HEK293T (cell line): ENCODE measurements at regions of chr9 and their contacts with region 1.

Region 1: GRCh38 chr9:94065535-94065961 is 18.7 kb upstream of the PTPDC1 start:
- DNase-seq: peak; percentile 56

Region 2: DNA sequence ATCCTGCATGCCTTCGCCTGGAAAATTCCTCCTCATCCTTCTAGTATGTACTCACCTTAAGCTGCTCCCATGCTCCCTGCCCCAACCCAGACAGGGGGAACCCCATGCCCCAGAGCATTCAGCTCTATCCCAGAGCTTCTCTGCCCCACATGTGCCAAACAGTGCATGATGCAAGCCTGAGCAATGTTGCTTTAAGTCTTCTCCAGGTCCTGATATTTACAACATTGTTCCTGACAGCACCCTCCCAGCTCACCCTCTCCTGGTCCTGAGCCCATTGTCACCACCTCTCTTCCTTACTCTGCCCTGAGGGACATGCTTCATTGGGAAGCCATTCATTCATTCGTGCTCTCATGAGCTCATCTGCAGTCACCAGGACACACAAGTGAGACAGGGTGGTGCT is 87.0 kb before region 1 on chr9:
- CTCF ChIA-PET with region 1: no interaction called
- POLR2A ChIA-PET with region 1: no interaction called
- DNase-seq: no peak

Region 3: DNA sequence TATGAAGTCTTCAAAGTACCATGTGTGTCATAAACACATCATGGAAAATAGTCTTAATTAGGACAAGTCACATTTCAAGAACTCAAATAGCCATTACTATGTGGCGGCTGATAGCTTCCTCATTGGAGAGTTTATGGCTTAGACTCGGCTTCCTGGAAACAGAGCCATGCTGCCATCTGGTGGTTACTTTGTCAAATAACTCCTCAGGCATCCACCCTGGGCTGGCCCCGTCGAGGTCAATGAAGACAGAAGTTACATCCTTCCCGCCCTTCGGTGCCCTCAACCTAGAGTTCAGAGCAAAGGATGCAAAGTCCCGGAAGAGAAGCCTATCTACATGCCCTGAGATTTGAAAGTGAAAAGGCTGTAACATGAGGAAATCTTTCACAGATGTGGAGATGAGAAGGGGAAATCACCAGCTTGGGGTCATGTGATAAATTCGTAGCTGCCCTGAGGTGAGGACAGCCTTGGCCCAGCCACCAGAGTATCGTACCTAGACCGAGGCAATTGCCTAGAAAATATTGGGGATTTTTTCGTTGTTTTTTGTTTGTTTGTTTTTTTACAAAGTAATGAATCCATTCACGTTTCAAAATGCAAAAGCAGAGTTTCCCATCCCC is 148.1 kb after region 1 on chr9:
- CTCF ChIA-PET with region 1: interaction called, 25 read pairs
- POLR2A ChIA-PET with region 1: no interaction called
- DNase-seq: peak; percentile 86